CD4-positive, alpha-beta memory T cell (primary cell): ENCODE measurements at regions of chr19 and their contacts with region 1.

Region 1: DNA sequence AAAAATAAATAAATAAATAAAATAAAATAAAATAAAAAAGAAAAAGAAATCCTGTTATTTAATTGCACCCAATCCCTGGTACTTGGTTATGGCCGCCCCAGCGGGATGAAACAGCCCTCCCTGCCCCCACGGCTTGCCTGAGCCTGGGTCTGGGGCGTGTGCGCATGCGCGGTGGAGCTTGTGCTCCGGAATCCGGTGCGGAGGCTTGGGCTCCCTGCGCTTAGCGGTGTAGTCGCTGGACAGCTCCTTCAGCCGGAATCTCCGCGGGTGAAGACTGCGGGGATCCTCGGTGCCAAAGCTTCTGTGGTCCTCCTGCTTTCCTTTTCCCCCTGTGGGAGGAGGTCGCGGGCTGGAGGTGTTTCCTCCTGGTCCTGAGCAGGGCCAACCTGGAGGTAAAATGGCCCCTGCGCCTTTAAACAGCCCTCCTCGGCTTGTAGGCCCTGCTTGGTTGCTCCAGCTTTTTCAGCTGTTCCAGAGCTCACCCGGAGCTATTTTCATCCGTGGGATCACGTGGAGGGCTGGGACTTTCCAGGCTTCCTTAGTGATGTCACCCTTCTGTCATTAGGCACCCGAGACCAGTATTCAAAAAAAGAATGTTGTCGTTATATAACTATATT is at the start of gene PLA2G4C:
- DNase-seq: peak; percentile 79 to 82 (median 80)
- H3K4me3 ChIP-seq: peak within 1 kb of the TSS; percentile 34 to 56
- H3K4me3 Mint-ChIP-seq: peak within 1 kb of the TSS; percentile 74 to 94 (median 84)
- H3K27ac ChIP-seq: peak within 1 kb of the TSS; percentile 58
- H3K27ac Mint-ChIP-seq: peak within 1 kb of the TSS; percentile 57 to 93 (median 81)
- H3K4me1 ChIP-seq: peaks cover 10% of the 10 kb centered on the region
- H3K4me1 Mint-ChIP-seq: peaks cover 2 to 17% (median 11%) of the 10 kb centered on the region in 4 donors
- H3K27me3 ChIP-seq: no peaks in the 10 kb centered on the region
- H3K27me3 Mint-ChIP-seq: peaks cover 0 to 2% of the 10 kb centered on the region in 2 donors
- total RNA-seq, gene PLA2G4C: 10.7 to 11.1 TPM

Region 2: DNA sequence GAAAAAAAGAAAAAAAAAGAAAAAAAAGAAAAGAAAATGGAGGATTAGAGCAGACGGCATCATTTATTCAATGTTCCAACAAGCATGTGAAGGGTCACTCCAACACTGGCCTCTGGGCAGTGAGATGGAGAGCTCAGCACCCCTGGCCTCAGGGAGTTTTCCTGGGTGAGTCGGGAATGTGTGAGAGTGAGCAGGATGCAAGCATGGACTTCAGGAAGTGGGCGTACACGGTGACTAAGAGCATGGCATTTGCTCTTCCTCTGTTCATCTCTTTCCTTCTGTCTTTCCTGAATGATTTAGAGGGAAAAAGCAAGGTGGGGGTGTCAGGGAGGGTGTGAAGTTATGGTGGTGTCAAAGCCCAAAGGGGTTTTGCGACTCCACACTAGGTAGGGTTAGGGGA is 65.9 kb before region 1 on chr19:
- CTCF ChIA-PET with region 1: no interaction called
- POLR2A ChIA-PET with region 1: no interaction called
- intact Hi-C with region 1: no loop called
- DNase-seq: no peak
- H3K4me3 ChIP-seq: no peak overlapping the region
- H3K4me3 Mint-ChIP-seq: no peak overlapping the region
- H3K27ac ChIP-seq: no peak overlapping the region
- H3K27ac Mint-ChIP-seq: no peak overlapping the region
- H3K4me1 ChIP-seq: no peaks in the 10 kb centered on the region
- H3K4me1 Mint-ChIP-seq: no peaks in the 10 kb centered on the region
- H3K27me3 ChIP-seq: peaks cover 3% of the 10 kb centered on the region
- H3K27me3 Mint-ChIP-seq: peaks cover 15 to 25% of the 10 kb centered on the region in 2 donors

Region 3: GRCh38 chr19:48152551-48152950 is 42.1 kb after region 1 on chr19:
- CTCF ChIA-PET with region 1: interaction called, 76 read pairs
- POLR2A ChIA-PET with region 1: interaction called, 4 read pairs
- intact Hi-C with region 1: loop called (anchors 1 kb)
- DNase-seq: peak in 4 of 5 donors; percentile 44 to 63 (median 52)
- H3K4me3 ChIP-seq: no peak overlapping the region
- H3K4me3 Mint-ChIP-seq: no peak overlapping the region
- H3K27ac ChIP-seq: no peak overlapping the region
- H3K27ac Mint-ChIP-seq: peak overlapping the region in 1 of 7 donors; percentile 43
- H3K4me1 ChIP-seq: no peaks in the 10 kb centered on the region
- H3K4me1 Mint-ChIP-seq: peaks cover 0 to 3% (median 1%) of the 10 kb centered on the region in 4 donors
- H3K27me3 ChIP-seq: no peaks in the 10 kb centered on the region
- H3K27me3 Mint-ChIP-seq: no peaks in the 10 kb centered on the region

Region 4: DNA sequence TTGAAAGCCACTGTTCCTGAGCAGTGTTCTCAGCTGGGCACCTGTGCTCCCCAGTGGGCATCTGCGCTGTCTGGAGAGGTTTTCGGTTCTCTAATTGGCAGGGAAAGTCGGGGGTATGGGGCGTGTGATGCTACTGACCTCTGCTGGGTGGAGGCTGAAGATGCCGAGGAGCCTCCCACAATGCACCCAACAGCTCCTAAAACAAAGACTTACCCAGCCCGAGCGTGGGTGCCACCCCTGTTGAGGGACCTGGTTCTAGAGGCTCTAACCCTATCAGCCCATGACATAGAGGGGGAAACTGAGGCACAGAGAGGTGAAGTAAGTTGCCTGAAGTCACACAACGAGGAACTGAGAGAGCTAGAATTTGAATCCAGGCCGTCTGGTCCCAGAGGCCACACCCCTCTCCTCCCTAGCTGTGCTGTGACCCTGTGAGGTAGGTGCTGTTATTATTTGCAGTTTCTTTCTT is 498.4 kb after region 1 on chr19:
- CTCF ChIA-PET with region 1: no interaction called
- POLR2A ChIA-PET with region 1: no interaction called
- intact Hi-C with region 1: no loop called
- DNase-seq: peak; percentile 57 to 63 (median 60)
- H3K4me3 ChIP-seq: no peak overlapping the region
- H3K4me3 Mint-ChIP-seq: peak overlapping the region in 6 of 8 donors; percentile 24 to 73 (median 53)
- H3K27ac ChIP-seq: no peak overlapping the region
- H3K27ac Mint-ChIP-seq: peak overlapping the region in 5 of 7 donors; percentile 22 to 94 (median 73)
- H3K4me1 ChIP-seq: no peaks in the 10 kb centered on the region
- H3K4me1 Mint-ChIP-seq: peaks cover 2 to 6% (median 5%) of the 10 kb centered on the region in 4 donors
- H3K27me3 ChIP-seq: no peaks in the 10 kb centered on the region
- H3K27me3 Mint-ChIP-seq: no peaks in the 10 kb centered on the region